H1 (cell line): ENCODE measurements at regions of chr11 and their contacts with region 1.

Region 1: GRCh38 chr11:72030472-72031045 is 31.9 kb downstream of the IL18BP start:
- DNase-seq: no peak
- H3K4me3 ChIP-seq: no peak overlapping the region
- H3K27ac ChIP-seq: no peak overlapping the region
- H3K4me1 ChIP-seq: no peaks in the 10 kb centered on the region
- H3K27me3 ChIP-seq: no peaks in the 10 kb centered on the region
- CTCF ChIP-seq: no peak
- EP300 ChIP-seq: no peak
- POLR2A ChIP-seq: no peak
- RAD21 ChIP-seq: no peak

Region 2: DNA sequence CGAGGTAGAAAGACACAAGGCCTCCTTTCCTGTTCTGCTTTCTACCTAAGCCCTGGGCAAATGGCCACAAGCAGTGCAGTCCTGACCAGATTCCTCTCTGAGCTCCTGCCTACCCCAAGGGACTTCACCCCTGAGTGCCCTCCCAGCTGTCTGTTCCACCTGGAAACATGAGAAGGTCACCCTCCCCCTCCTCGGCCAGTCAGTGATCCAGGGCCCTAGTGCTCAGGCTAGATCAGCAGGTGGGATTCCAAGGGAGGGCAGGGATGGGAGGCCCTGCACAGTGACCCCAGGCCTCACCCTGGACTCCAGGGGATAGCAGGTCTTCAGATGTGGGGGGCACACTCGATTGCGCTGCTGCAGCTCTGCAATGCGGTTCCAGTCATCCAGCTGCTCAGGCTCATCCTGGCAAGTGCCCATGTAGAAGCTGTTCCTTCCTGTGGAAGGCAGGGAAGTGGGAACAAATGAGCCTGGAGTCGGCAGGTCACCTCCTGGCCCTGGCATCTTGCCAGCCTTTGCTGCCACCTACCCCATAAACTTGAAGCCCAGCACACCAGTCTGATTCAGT is 25.5 kb before region 1 on chr11:
- CTCF ChIA-PET with region 1: interaction called, 17 read pairs
- POLR2A ChIA-PET with region 1: no interaction called
- DNase-seq: no peak
- H3K4me3 ChIP-seq: no peak overlapping the region
- H3K27ac ChIP-seq: no peak overlapping the region
- H3K4me1 ChIP-seq: no peaks in the 10 kb centered on the region
- H3K27me3 ChIP-seq: no peaks in the 10 kb centered on the region
- CTCF ChIP-seq: no peak
- EP300 ChIP-seq: no peak
- POLR2A ChIP-seq: no peak
- RAD21 ChIP-seq: no peak

Region 3: GRCh38 chr11:72040726-72041441 is 10.3 kb after region 1 on chr11:
- CTCF ChIA-PET with region 1: interaction called, 57 read pairs
- POLR2A ChIA-PET with region 1: interaction called, 12 read pairs
- DNase-seq: peak; percentile 50 to 73
- H3K4me3 ChIP-seq: peak overlapping the region; percentile 34 to 55 (median 42); a peak in 7 of 8 replicates
- H3K27ac ChIP-seq: peak overlapping the region; percentile 92
- H3K4me1 ChIP-seq: peaks cover 29 to 36% (median 33%) of the 10 kb centered on the region in 4 experiments
- H3K27me3 ChIP-seq: no peaks in the 10 kb centered on the region
- CTCF ChIP-seq: no peak
- EP300 ChIP-seq: peak in 1 of 2 experiments; percentile 31; a peak in 1 of 3 replicates
- POLR2A ChIP-seq: peak in 1 of 2 experiments; percentile 21; a peak in 2 of 3 replicates
- RAD21 ChIP-seq: no peak

Region 4: DNA sequence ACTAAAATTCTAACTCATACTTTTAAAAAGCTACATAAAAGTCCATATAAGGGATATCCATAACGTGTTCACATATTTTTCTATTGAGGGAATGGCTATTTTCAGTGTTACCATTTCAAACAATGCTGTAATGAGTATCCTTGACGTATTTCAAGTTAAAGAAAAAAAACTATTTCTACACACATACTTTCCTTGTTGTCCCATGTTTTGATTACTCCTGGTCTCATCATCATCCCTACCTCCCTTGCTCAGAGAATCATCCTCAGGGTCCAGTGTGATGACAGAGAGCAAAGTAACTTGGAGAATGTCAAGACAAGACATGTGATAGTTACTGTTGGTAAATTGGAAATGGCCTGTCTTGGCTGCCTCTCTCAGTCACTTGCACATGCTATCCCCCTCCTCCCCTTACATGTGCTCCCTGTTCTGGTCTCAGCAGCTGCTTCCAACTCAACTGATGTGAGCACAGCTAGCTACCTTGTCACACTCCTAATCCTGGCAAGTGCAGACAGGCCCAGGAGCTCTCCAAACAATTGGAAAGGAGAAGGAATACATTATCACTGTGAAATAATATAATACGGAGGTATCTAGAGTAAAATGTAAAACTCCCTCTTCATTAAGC is 28.0 kb after region 1 on chr11:
- CTCF ChIA-PET with region 1: interaction called, 11 read pairs
- POLR2A ChIA-PET with region 1: interaction called, 3 read pairs
- DNase-seq: no peak
- H3K4me3 ChIP-seq: no peak overlapping the region
- H3K27ac ChIP-seq: no peak overlapping the region
- H3K4me1 ChIP-seq: no peaks in the 10 kb centered on the region; a peak in 1 of 7 replicates
- H3K27me3 ChIP-seq: no peaks in the 10 kb centered on the region
- CTCF ChIP-seq: no peak
- EP300 ChIP-seq: no peak
- POLR2A ChIP-seq: no peak
- RAD21 ChIP-seq: no peak

Region 5: GRCh38 chr11:72085621-72086351 is 55.2 kb after region 1 on chr11:
- CTCF ChIA-PET with region 1: interaction called, 423 read pairs
- POLR2A ChIA-PET with region 1: interaction called, 40 read pairs
- DNase-seq: no peak
- H3K4me3 ChIP-seq: no peak overlapping the region
- H3K27ac ChIP-seq: no peak overlapping the region
- H3K4me1 ChIP-seq: peaks cover 0 to 2% (median 0%) of the 10 kb centered on the region in 4 experiments; a peak in 2 of 7 replicates
- H3K27me3 ChIP-seq: no peaks in the 10 kb centered on the region
- CTCF ChIP-seq: no peak
- EP300 ChIP-seq: no peak
- POLR2A ChIP-seq: no peak
- RAD21 ChIP-seq: no peak

Region 6: DNA sequence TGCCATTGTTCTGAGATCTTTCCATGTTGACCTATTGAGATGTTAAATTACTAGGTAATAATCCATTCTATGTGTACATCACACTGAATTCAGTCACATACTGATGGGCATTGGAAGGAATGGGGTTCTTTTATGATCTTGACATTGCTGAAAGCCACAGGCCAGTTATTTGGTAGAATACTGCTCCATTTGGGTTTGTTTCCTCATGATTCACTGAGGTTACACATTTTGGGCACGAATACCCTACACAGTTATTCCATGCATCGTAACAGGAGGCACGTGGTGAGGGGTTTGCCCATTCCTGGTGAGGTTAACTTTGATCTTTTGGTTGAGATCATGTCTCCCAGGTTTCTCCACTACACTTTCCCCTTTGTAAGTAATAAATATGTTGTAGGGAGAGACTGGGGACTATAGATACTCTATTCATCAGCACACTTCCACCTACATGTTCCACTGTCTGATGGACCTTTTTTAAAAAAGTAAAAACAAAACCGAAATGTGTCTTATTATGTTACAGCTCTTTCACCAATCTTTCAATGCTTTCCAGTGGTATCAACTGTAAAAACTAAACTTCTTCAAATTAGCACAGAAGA is 149.3 kb after region 1 on chr11:
- CTCF ChIA-PET with region 1: interaction called, 20 read pairs
- POLR2A ChIA-PET with region 1: no interaction called
- DNase-seq: no peak
- H3K4me3 ChIP-seq: no peak overlapping the region
- H3K27ac ChIP-seq: no peak overlapping the region
- H3K4me1 ChIP-seq: no peaks in the 10 kb centered on the region
- H3K27me3 ChIP-seq: no peaks in the 10 kb centered on the region
- CTCF ChIP-seq: no peak
- EP300 ChIP-seq: no peak
- POLR2A ChIP-seq: no peak
- RAD21 ChIP-seq: no peak